Activated CD4-positive, alpha-beta T cell treated with anti-CD3 and anti-CD28 coated beads for 36 hours (primary cell): ENCODE measurements at regions of chr6 and their contacts with region 1.

Region 1: GRCh38 chr6:166786704-166787293 is 159.7 kb upstream of the RPS6KA2 start:
- DNase-seq: no peak
- ATAC-seq: no peak
- H3K4me3 Mint-ChIP-seq: no peak overlapping the region
- H3K27ac Mint-ChIP-seq: no peak overlapping the region
- H3K4me1 Mint-ChIP-seq: no peaks in the 10 kb centered on the region
- H3K27me3 Mint-ChIP-seq: no peaks in the 10 kb centered on the region

Region 2: DNA sequence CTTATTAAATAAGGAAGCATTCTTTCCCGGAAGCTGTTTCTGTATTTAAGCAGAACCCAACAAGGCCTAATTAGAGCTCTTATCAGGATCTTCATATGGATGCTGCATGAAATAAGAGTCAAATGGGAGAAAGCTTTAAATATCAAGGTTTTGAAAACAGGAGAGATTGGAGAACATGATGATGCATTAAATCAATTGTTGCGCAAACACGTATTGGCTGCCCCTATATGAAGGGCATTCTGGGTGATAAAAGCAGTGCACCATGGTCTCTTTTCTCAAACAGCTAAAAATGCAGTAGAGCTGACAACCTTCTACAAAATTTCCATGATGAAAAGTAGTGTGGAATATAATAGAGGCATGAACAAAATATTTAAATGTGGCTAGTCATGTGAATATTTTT is 718.0 kb before region 1 on chr6:
- CTCF ChIA-PET with region 1: no interaction called
- POLR2A ChIA-PET with region 1: no interaction called
- intact Hi-C with region 1: no loop called
- DNase-seq: no peak
- ATAC-seq: no peak
- H3K4me3 Mint-ChIP-seq: no peak overlapping the region
- H3K27ac Mint-ChIP-seq: no peak overlapping the region
- H3K4me1 Mint-ChIP-seq: no peaks in the 10 kb centered on the region
- H3K27me3 Mint-ChIP-seq: peaks cover 14% of the 10 kb centered on the region

Region 3: DNA sequence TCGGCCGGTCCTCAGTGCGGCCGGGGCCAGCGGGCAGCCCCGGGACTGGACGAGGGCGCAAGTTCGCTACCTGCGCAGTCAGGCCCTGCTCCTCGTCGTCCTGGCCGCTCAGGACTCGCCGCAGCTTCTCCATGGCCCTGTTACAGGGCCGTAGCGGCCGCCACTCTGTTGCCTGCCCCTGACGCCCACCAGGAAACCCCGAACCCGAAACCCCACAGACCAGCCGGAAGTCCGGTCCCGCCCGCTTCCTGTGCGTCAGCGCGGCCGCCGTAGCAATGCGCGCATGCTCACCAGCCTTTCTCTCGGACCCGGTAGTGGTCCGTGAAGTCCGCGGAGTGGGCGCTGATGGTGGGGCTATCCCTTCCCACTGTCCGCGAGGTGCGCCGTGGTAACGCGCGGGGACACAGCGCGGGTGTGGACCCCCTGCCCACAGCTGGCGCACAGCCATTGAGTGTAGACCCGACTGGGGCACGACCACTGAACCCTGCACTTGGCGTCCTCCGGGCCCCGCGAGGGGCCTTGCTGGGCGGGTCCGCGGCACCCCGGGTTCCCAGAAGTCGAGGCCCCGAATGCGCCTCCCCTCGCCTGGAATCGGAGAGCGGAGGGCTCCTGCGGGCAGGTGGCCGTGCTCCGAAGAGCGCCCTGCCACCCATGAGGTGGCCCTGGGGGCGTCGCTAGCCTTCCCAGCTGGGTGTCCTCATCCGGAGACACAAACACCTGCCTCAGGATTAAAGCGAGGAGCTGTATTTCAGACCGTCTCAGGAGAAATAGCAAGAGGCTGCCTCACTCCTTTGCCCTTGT is 444.2 kb before region 1 on chr6 and contains the start of gene SFT2D1:
- CTCF ChIA-PET with region 1: no interaction called
- POLR2A ChIA-PET with region 1: no interaction called
- intact Hi-C with region 1: no loop called
- DNase-seq: peak; percentile 80
- ATAC-seq: peak; percentile 75
- H3K4me3 Mint-ChIP-seq: peak within 1 kb of the TSS; percentile 81
- H3K27ac Mint-ChIP-seq: peak within 1 kb of the TSS; percentile 80
- H3K4me1 Mint-ChIP-seq: peaks cover 14% of the 10 kb centered on the region
- H3K27me3 Mint-ChIP-seq: no peaks in the 10 kb centered on the region
- total RNA-seq, gene SFT2D1: 39.8 to 54.2 TPM

Region 4: DNA sequence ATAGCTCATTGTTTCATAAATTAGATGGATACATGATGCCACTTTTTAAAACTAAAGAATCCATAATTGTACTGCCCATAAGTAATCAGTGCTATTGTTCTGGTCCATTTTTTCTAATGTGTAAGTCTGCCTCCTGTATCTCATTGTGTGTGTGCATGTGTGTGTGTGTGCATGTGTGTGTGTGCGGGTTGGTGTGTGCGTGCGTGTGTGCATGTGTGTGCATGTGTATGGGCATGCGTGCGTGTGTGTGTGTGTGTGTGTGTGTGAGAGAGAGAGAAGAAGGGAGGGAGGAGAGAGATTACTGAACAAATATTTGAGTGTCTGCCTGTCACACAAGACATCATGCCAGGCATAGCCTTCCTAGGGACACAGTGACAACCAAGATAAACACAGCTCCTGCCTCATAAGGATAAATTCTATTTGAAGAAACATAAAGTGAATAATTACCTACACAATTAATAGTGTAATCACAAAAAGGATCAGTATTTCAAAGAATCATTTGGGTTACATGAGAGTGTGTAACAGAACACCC is 126.6 kb before region 1 on chr6:
- CTCF ChIA-PET with region 1: no interaction called
- POLR2A ChIA-PET with region 1: no interaction called
- intact Hi-C with region 1: no loop called
- DNase-seq: no peak
- ATAC-seq: no peak
- H3K4me3 Mint-ChIP-seq: no peak overlapping the region
- H3K27ac Mint-ChIP-seq: no peak overlapping the region
- H3K4me1 Mint-ChIP-seq: peaks cover 9% of the 10 kb centered on the region
- H3K27me3 Mint-ChIP-seq: peaks cover 27% of the 10 kb centered on the region

Region 5: DNA sequence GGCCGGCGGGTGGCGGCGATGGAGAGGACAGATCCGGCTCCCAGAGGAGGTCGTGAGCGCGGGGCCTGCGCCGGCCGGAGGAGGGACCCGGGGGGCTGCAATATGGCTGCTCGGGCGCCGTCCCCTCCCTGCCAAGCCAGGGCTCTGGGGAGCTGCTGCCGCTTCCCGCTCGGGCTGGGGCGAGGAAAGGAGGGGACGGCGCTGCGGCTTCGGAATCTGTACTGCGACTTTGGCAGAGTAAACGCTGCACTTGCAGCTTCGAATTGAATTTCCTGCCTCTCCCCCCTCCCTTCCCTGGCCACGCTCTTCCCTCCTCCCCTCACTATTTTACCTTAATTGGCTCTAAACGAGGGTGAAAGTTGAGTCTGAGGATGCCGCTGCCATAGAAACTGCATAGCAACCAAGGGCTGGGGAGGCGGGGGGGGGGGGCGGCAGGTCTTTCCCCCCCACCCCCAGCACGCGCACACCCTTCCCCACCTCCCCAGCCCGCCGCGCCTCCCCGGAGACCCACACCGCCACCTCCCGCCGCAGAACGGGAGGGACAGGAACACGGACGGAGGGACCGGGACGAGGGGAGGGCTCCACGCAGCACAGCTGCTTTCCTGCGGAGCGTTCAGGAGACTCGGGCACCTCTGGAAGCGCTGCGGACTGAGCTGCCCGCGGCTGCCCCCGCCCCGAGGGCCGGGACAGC is 75.6 kb after region 1 on chr6:
- CTCF ChIA-PET with region 1: no interaction called
- POLR2A ChIA-PET with region 1: interaction called, 4 read pairs
- intact Hi-C with region 1: loop called in 1 of 2 experiments (anchors 2 kb)
- DNase-seq: peak; percentile 57
- ATAC-seq: peak; percentile 83
- H3K4me3 Mint-ChIP-seq: peak overlapping the region; percentile 73
- H3K27ac Mint-ChIP-seq: no peak overlapping the region
- H3K4me1 Mint-ChIP-seq: peaks cover 7% of the 10 kb centered on the region
- H3K27me3 Mint-ChIP-seq: peaks cover 8% of the 10 kb centered on the region

Region 6: DNA sequence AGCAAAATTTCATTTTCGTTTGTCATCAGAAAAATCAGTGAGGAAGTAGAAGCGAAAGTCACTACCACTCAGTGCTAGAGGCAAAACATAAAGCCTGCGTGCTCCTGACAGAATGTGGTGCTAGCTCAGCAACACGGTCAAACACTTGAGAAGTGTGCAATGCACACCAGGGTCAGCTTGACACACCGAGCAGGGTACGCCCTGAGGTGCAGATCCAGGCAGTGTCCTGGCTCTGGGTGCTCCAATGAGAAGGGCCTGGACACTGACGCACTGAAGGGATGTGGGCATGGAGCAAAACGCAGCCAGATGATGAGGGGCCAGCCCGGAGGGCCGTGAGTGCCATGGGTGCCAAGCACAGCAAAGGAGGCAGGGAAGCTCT is 163.6 kb after region 1 on chr6:
- CTCF ChIA-PET with region 1: interaction called, 3 read pairs
- POLR2A ChIA-PET with region 1: interaction called, 4 read pairs
- intact Hi-C with region 1: loop called (anchors 1 to 5 kb)
- DNase-seq: peak; percentile 48
- ATAC-seq: peak; percentile 34
- H3K4me3 Mint-ChIP-seq: peak overlapping the region; percentile 61
- H3K27ac Mint-ChIP-seq: peak overlapping the region; percentile 95
- H3K4me1 Mint-ChIP-seq: peaks cover 62% of the 10 kb centered on the region
- H3K27me3 Mint-ChIP-seq: no peaks in the 10 kb centered on the region

Region 7: GRCh38 chr6:166989427-166990032 is 202.7 kb after region 1 on chr6:
- CTCF ChIA-PET with region 1: interaction called, 43 read pairs
- POLR2A ChIA-PET with region 1: no interaction called
- intact Hi-C with region 1: loop called (anchors 1 kb)
- DNase-seq: peak; percentile 19
- ATAC-seq: peak; percentile 78
- H3K4me3 Mint-ChIP-seq: no peak overlapping the region
- H3K27ac Mint-ChIP-seq: no peak overlapping the region
- H3K4me1 Mint-ChIP-seq: peaks cover 23% of the 10 kb centered on the region
- H3K27me3 Mint-ChIP-seq: no peaks in the 10 kb centered on the region

Region 8: DNA sequence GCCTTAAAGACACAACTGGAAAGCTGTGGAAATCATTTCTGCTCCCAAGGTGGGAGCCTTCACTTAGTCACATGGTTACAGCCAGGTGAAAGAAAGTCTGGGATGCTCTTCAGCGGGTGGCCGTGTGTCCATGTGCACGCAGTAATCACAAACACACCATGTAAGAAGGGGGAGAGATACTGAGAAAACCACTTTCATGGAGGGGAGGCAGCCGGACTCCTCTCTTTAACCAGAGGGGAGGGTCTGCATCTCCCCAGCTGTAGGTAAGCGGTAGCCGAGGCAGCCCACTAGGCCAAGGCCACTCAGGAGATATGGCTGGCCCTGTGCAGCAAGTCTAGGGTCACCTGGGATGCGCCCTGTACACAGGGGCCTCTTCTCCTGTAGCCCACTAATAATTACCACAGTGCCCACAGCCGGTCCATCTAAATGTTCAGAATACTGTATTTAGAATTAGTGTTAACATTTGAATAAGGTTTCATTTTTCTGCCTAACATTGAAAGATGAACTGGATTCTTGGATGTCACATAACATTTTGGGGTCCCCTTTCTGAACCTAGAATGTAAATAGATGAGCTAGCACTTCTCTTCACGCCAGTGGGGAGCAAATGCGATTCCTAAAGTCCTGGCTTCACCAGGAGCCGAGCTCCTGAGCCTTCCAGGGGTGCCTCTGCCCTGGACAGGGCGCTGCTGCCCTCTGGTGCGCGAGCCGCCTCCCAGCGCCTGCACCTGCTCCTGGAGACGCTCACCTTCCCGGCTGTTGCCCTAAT is 355.1 kb after region 1 on chr6:
- CTCF ChIA-PET with region 1: interaction called, 7 read pairs
- POLR2A ChIA-PET with region 1: no interaction called
- intact Hi-C with region 1: loop called in 1 of 2 experiments (anchors 1 kb)
- DNase-seq: peak; percentile 75
- ATAC-seq: peak; percentile 85
- H3K4me3 Mint-ChIP-seq: no peak overlapping the region
- H3K27ac Mint-ChIP-seq: no peak overlapping the region
- H3K4me1 Mint-ChIP-seq: peaks cover 22% of the 10 kb centered on the region
- H3K27me3 Mint-ChIP-seq: peaks cover 3% of the 10 kb centered on the region